ENCODE measurements at regions of chr4 and their contacts with region 1.

Region 1: GRCh38 chr4:26360864-26361263 is 40.0 kb downstream of the RBPJ start:
- DNase-seq: no peak
- H3K4me3 Mint-ChIP-seq: peak overlapping the region; percentile 18
- H3K27ac Mint-ChIP-seq: peak overlapping the region; percentile 69
- H3K4me1 Mint-ChIP-seq: peaks cover 49% of the 10 kb centered on the region
- H3K27me3 Mint-ChIP-seq: no peaks in the 10 kb centered on the region

Region 2: GRCh38 chr4:26372525-26373172 is 11.8 kb after region 1 on chr4:
- CTCF ChIA-PET with region 1: interaction called, 7 read pairs
- POLR2A ChIA-PET with region 1: interaction called, 17 read pairs
- DNase-seq: peak; percentile 58
- H3K4me3 Mint-ChIP-seq: no peak overlapping the region
- H3K27ac Mint-ChIP-seq: peak overlapping the region; percentile 69
- H3K4me1 Mint-ChIP-seq: peaks cover 68% of the 10 kb centered on the region
- H3K27me3 Mint-ChIP-seq: no peaks in the 10 kb centered on the region

Measured in activated CD4-positive, alpha-beta memory T cell treated with anti-CD3 and anti-CD28 coated beads, Interleukin-2, amount 10 ng/mL, durations not matched to agents 7 days and 5 days (primary cell).